ENCODE measurements at regions of chr9 and their contacts with region 1.

Region 1: DNA sequence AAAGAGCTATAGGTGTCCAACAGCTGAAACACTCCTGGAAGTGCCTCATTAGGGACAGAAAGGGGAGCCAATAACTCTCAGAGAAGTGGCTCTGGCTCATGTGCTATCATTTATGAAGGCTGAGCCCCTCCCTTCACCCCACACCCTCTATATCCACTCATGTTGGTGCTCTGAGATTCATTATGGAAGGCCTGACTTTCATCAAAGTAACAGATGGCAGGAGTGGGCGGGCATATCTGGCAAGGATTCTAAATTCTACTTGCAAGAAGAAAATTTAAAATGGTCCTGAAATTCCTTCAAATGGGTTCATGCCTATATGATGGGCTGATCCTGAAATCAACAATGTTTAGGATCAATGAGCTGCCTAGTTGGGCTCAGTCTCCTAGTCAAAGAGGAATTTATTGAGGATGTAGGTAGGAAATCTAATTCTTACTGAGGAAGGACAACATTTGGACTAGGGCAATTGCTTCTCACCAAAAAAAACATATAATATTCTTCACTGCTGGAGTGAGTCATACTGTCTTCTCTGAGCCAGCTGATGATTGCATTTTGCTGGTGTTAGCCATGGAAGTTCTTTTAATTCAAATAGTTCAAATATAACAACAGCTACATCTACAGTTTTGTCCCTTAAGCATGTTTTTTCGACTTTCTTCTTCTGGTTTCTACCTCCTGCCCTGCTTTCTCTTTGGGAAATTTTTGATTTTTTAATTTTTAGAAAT is 23.5 kb downstream of the NMRK1 start:
- DNase-seq: no peak
- H3K4me3 ChIP-seq: no peak overlapping the region
- CTCF ChIP-seq: no peak
- POLR2A ChIP-seq: no peak

Region 2: GRCh38 chr9:75033791-75034473 is 30.5 kb before region 1 on chr9:
- intact Hi-C with region 1: loop called (anchors 5 kb)
- DNase-seq: no peak
- H3K4me3 ChIP-seq: no peak overlapping the region
- CTCF ChIP-seq: no peak
- POLR2A ChIP-seq: no peak

Measured in lower leg skin (tissue), 4 donors.